SK-N-SH (cell line): ENCODE measurements at regions of chr18 and their contacts with region 1.

Region 1: GRCh38 chr18:9614401-9615279 is at the start of gene PPP4R1:
- DNase-seq: peak; percentile 94
- H3K4me3 ChIP-seq: peak within 1 kb of the TSS; percentile 63 to 86
- H3K27ac ChIP-seq: peak within 1 kb of the TSS; percentile 88 to 93
- H3K4me1 ChIP-seq: peaks cover 15 to 23% of the 10 kb centered on the region in 2 experiments; a peak in 3 of 4 replicates
- H3K27me3 ChIP-seq: no peaks in the 10 kb centered on the region
- CTCF ChIP-seq: no peak
- EP300 ChIP-seq: no peak
- RAD21 ChIP-seq: no peak
- polyA plus RNA-seq, gene PPP4R1: 53.4 and 84.4 TPM in 2 replicates

Region 2: DNA sequence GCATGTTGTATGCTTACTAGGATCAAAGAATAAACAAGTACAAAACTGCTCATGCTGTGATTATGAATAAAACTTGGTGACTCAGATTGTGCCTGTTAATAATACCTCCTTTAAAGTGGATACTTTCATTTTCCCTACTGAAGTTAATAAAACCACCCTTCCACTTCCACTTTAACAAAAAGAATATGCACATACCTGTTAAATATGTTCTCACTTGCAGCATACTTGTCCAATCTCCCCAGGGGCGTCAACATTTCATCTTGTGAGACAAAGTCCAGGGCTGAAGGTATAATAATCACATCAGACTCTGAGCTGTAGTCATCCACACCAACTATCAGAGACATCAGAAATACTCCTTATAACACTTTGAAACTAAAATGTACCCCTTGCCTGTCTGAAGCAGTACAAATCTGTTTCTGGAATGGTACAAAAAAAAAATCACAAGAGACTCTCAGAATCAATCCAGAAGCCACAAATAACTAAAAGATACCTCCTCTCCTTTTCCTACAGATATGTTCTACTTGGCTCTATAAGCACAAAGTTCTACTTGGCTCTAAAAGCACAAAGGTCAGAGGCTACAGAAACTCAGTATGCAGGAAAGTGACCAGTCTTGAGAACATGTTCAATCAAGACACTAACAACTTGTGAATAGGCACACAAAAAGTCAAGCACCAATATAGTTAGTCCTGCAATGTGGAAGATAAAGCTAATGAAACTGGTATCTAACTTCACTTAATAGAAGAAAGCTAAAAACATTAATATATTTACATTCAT is 19.6 kb before region 1 on chr18:
- CTCF ChIA-PET with region 1: interaction called, 12 read pairs
- POLR2A ChIA-PET with region 1: interaction called, 3 read pairs
- DNase-seq: no peak
- H3K4me3 ChIP-seq: peak overlapping the region in 1 of 2 experiments; percentile 6; a peak in 1 of 4 replicates
- H3K27ac ChIP-seq: peak overlapping the region in 1 of 2 experiments; percentile 36; a peak in 2 of 4 replicates
- H3K4me1 ChIP-seq: peaks cover 2 to 4% of the 10 kb centered on the region in 2 experiments; a peak in 2 of 4 replicates
- H3K27me3 ChIP-seq: no peaks in the 10 kb centered on the region
- CTCF ChIP-seq: no peak
- EP300 ChIP-seq: no peak
- RAD21 ChIP-seq: no peak

Region 3: GRCh38 chr18:9771261-9771976 is 156.8 kb after region 1 on chr18:
- CTCF ChIA-PET with region 1: interaction called, 12 read pairs
- POLR2A ChIA-PET with region 1: no interaction called
- DNase-seq: peak; percentile 86
- H3K4me3 ChIP-seq: no peak overlapping the region; a peak in 1 of 4 replicates
- H3K27ac ChIP-seq: no peak overlapping the region
- H3K4me1 ChIP-seq: peaks cover 0 to 2% of the 10 kb centered on the region in 2 experiments; a peak in 1 of 4 replicates
- H3K27me3 ChIP-seq: no peaks in the 10 kb centered on the region
- CTCF ChIP-seq: peak; percentile 95
- EP300 ChIP-seq: no peak
- RAD21 ChIP-seq: peak; percentile 94